ENCODE measurements at regions of chr5 and their contacts with region 1.

Region 1: GRCh38 chr5:96189028-96189826 is 227.6 kb upstream of the ELL2 start:
- DNase-seq: no peak
- ATAC-seq: no peak
- H3K4me3 ChIP-seq: no peak overlapping the region
- H3K27ac ChIP-seq: peak overlapping the region; percentile 8; the same call in 1 of the 2 replicates
- H3K4me1 ChIP-seq: no peaks in the 10 kb centered on the region
- H3K27me3 ChIP-seq: no peaks in the 10 kb centered on the region
- CTCF ChIP-seq: no peak

Region 2: DNA sequence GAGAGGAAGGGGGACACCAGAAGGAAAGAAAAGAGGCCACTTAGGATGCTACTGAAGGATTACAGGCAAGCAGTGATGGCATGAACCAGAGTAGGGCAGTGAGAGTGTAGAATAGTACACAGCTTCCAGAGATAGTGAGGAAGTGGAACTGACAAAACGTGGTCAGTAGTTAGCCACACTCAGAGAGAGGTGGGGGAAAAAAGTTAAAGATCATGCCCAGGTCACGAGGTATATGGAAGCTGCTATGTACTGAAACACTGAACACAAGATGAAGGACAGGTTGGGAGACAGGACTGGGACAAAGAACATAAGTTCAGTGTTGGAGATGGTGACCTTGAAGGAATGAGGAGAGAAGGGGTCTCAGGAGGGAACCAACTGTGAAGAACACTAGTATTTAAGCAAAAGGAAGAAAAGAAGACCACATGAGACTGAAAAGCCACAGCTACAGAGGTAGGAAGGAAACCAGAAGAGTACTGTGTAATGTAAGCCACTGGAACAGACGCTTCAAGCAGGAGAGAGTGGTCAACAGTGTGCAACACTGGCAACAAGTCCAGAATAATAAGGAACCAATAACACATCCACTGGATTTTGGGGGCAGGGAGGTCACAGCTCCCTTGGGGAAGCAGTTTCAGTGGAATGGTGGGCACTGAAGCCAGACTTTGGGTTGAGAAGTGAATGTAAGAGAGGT is 273.1 kb before region 1 on chr5:
- CTCF ChIA-PET with region 1: no interaction called
- POLR2A ChIA-PET with region 1: no interaction called
- in situ Hi-C with region 1: no loop called
- intact Hi-C with region 1: no loop called
- DNase-seq: no peak
- ATAC-seq: no peak
- H3K4me3 ChIP-seq: no peak overlapping the region
- H3K27ac ChIP-seq: no peak overlapping the region
- H3K4me1 ChIP-seq: no peaks in the 10 kb centered on the region
- H3K27me3 ChIP-seq: no peaks in the 10 kb centered on the region
- CTCF ChIP-seq: no peak

Region 3: GRCh38 chr5:95954716-95955115 is 234.5 kb before region 1 on chr5:
- CTCF ChIA-PET with region 1: no interaction called
- POLR2A ChIA-PET with region 1: interaction called, 11 read pairs
- in situ Hi-C with region 1: no loop called
- intact Hi-C with region 1: no loop called
- DNase-seq: no peak
- ATAC-seq: no peak
- H3K4me3 ChIP-seq: no peak overlapping the region
- H3K27ac ChIP-seq: no peak overlapping the region
- H3K4me1 ChIP-seq: peaks cover 37% of the 10 kb centered on the region
- H3K27me3 ChIP-seq: no peaks in the 10 kb centered on the region
- CTCF ChIP-seq: no peak

Measured in Panc1 (cell line).